A549 (cell line): ENCODE measurements at regions of chr3 and their contacts with region 1.

Region 1: GRCh38 chr3:151146071-151146730 is 56.8 kb downstream of the GPR171 start:
- DNase-seq: peak; percentile 60 to 79
- ATAC-seq: peak; percentile 96 to 98
- H3K4me3 ChIP-seq: no peak overlapping the region
- H3K27ac ChIP-seq: no peak overlapping the region
- H3K4me1 ChIP-seq: peaks cover 7% of the 10 kb centered on the region; the same call in 2 of the 3 replicates
- CTCF ChIP-seq: peak; percentile 95
- EP300 ChIP-seq: no peak
- POLR2A ChIP-seq: no peak
- RAD21 ChIP-seq: peak; percentile 93 to 94

Region 2: GRCh38 chr3:150925751-150926201 is 220.4 kb before region 1 on chr3:
- CTCF ChIA-PET with region 1: interaction called, 14 read pairs
- POLR2A ChIA-PET with region 1: no interaction called
- DNase-seq: peak; percentile 49 to 66
- ATAC-seq: peak; percentile 86 to 95
- H3K4me3 ChIP-seq: no peak overlapping the region
- H3K27ac ChIP-seq: no peak overlapping the region
- H3K4me1 ChIP-seq: no peaks in the 10 kb centered on the region
- CTCF ChIP-seq: peak; percentile 66
- EP300 ChIP-seq: no peak
- POLR2A ChIP-seq: no peak
- RAD21 ChIP-seq: peak; percentile 70 to 77

Region 3: DNA sequence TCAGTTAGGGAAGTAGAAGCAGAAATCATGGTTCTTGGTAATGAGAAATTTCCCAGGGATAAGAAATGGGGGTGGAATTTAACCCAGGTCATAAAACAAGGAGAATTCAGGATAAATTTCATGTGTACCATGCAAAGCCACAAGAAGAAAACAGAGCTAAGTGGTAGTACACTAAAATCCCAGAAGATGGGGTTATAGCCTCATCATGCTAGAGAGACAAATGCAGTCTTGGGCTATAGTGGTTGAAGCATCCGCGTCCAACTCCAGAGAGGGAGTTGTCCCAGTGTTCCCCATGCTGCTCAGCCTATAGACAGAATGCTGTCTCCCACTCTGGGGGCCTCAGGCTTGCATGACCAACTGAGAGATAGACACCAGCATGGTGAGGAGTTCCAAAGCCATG is 137.5 kb before region 1 on chr3:
- CTCF ChIA-PET with region 1: interaction called, 30 read pairs
- POLR2A ChIA-PET with region 1: no interaction called
- DNase-seq: peak; percentile 8 to 33
- ATAC-seq: peak; percentile 71 to 74; a peak in 5 of 6 replicates
- H3K4me3 ChIP-seq: no peak overlapping the region
- H3K27ac ChIP-seq: no peak overlapping the region
- H3K4me1 ChIP-seq: no peaks in the 10 kb centered on the region
- CTCF ChIP-seq: peak; percentile 15; the same call in 1 of the 3 replicates
- EP300 ChIP-seq: no peak
- POLR2A ChIP-seq: no peak
- RAD21 ChIP-seq: peak; percentile 35 to 52; a peak in 4 of 5 replicates

Region 4: GRCh38 chr3:151133917-151134450 is 12.2 kb before region 1 on chr3:
- CTCF ChIA-PET with region 1: interaction called, 11 read pairs
- POLR2A ChIA-PET with region 1: no interaction called
- DNase-seq: no peak
- ATAC-seq: no peak
- H3K4me3 ChIP-seq: no peak overlapping the region
- H3K27ac ChIP-seq: no peak overlapping the region
- H3K4me1 ChIP-seq: no peaks in the 10 kb centered on the region
- CTCF ChIP-seq: no peak
- EP300 ChIP-seq: no peak
- POLR2A ChIP-seq: no peak
- RAD21 ChIP-seq: no peak

Region 5: DNA sequence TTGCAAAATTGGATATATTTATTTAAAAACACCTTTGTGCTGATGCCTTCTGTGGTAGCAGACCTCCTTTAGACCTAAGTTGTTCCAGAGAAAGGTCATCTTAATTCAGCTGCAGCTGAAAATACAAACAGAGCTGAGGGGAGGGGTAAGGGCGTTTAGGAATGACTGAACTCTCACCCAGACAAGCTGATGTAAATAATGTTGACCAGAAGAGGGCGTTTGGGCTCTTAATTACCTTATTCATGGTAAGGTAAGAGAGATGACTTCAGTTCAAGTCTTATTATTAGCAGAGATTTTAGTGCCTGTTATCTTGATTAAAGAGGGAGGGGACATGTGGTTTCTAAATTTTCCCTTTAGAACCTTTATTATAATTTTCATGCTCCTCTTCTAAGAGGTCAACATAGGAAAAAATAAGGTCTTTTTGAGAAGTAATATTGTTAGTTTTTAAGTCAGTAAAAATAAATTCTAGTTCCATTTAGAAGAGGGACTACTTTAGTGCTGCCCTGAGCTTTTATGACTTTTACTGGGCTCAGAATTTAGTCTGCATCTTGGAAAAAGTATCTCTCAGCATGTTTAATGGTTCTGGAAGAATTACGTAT is 10.5 kb after region 1 on chr3:
- CTCF ChIA-PET with region 1: interaction called, 18 read pairs
- POLR2A ChIA-PET with region 1: no interaction called
- DNase-seq: peak; percentile 62 to 74
- ATAC-seq: peak; percentile 86 to 93
- H3K4me3 ChIP-seq: no peak overlapping the region
- H3K27ac ChIP-seq: no peak overlapping the region
- H3K4me1 ChIP-seq: no peaks in the 10 kb centered on the region
- CTCF ChIP-seq: peak; percentile 67
- EP300 ChIP-seq: no peak
- POLR2A ChIP-seq: no peak
- RAD21 ChIP-seq: peak; percentile 30 to 38; a peak in 3 of 5 replicates

Region 6: DNA sequence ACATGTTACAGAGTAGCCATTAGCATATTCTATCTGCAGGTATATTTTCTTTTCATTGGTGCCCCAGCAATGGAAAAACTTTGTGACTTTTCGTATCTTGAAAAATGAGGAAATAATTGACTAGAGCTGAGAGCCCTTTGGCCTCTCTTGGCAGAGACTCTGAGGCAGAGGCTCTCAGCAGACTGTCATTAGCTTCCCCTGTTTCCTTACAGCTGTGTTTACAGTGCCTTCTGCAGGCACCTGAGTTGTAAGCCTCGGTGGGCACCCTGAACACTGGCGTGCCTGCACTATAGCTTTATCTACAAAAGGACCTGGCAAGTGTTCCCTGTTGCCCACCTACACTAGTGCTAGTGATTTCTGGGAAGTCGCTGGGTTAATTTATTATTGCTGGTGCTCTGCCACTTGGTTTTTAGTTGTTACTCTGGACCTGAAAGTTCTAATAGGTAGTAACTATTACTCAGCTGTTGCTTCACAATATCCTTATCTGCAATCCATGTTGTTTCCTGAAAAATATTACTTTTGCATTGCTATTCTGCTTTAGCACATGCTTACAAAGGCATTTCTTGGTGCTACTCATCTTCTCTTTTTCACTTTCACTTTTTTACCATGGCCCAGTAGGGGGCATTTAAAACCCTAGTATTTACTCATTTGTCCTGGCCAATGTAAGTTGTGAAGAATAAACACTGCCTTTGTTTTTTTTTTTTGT is 64.6 kb after region 1 on chr3:
- CTCF ChIA-PET with region 1: no interaction called
- POLR2A ChIA-PET with region 1: no interaction called
- DNase-seq: no peak
- ATAC-seq: peak in 1 of 2 experiments; percentile 38; a peak in 2 of 6 replicates
- H3K4me3 ChIP-seq: no peak overlapping the region
- H3K27ac ChIP-seq: no peak overlapping the region
- H3K4me1 ChIP-seq: peaks cover 4% of the 10 kb centered on the region; the same call in 2 of the 3 replicates
- CTCF ChIP-seq: peak; percentile 8; the same call in 1 of the 3 replicates
- EP300 ChIP-seq: no peak
- POLR2A ChIP-seq: no peak
- RAD21 ChIP-seq: no peak

Region 7: DNA sequence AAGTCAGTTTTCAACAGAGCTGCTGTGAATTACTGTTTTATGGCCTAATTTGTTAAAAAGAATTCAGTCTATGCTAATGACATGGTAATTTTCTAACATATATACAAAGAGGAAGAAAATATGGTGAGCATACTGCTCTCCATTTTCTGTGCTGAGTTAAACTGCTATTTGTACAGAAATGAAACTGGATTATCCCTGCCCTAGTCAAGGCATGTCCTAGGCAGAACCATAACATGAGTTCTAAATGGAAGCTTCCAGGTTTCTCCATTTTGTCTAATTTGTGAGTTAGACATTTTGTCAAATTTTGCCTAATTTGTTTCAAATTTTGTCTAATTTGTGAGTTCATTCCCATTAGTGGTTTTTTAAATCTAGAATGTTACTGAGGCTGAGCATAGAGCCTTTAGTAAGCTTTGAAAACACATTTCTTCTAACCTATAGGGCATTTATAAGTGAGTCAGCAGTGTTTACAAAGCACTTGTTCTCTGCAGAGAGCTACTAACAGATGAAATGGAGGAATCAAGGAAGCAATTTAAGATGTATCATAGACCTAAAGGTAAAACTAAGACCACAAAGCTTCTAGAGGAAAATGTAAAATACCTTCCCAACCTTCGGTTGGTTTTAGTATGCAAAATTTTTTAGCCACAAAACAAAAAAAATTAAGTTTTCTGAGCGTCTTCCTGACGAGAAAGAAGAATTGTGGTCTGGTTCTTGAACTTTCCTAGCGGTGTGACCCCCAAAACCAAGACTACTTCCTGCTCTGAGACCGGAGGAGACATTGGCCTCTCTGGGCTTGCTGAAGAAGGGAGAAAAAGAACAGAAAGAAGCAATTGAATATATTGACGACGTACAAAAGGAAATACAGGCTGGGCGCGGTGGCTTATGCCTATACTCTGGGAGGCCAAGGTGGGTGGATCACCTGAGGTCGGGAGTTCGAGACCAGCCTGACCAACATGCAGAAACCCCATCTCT is 122.3 kb after region 1 on chr3:
- CTCF ChIA-PET with region 1: no interaction called
- POLR2A ChIA-PET with region 1: no interaction called
- DNase-seq: no peak
- ATAC-seq: no peak
- H3K4me3 ChIP-seq: no peak overlapping the region
- H3K27ac ChIP-seq: no peak overlapping the region
- H3K4me1 ChIP-seq: no peaks in the 10 kb centered on the region
- CTCF ChIP-seq: no peak
- EP300 ChIP-seq: no peak
- POLR2A ChIP-seq: no peak
- RAD21 ChIP-seq: no peak